Dorsolateral prefrontal cortex (tissue), 120 donors: ENCODE measurements at regions of chrX and their contacts with region 1.

Region 1: GRCh38 chrX:71181910-71182799 is 37.5 kb downstream of the NLGN3 start:
- DNase-seq: peak; percentile 60 to 91 (median 86)
- H3K4me3 ChIP-seq: peak overlapping the region; percentile 28 to 69 (median 55)
- H3K27ac ChIP-seq: peak overlapping the region; percentile 3 to 96 (median 88)
- H3K27me3 ChIP-seq: peaks cover 0 to 56% (median 8%) of the 10 kb centered on the region in 45 donors
- CTCF ChIP-seq: peak in 10 of 56 donors; percentile 9 to 39 (median 18)

Region 2: GRCh38 chrX:70998411-70999027 is 183.6 kb before region 1 on chrX:
- intact Hi-C with region 1: loop called in 1 of 2 experiments (anchors 2 kb)
- DNase-seq: peak in 4 of 10 donors; percentile 7 to 38 (median 32)
- H3K4me3 ChIP-seq: no peak overlapping the region
- H3K27ac ChIP-seq: no peak overlapping the region
- H3K27me3 ChIP-seq: peaks cover 0 to 28% (median 0%) of the 10 kb centered on the region in 45 donors
- CTCF ChIP-seq: peak in 41 of 56 donors; percentile 13 to 61 (median 35)

Region 3: DNA sequence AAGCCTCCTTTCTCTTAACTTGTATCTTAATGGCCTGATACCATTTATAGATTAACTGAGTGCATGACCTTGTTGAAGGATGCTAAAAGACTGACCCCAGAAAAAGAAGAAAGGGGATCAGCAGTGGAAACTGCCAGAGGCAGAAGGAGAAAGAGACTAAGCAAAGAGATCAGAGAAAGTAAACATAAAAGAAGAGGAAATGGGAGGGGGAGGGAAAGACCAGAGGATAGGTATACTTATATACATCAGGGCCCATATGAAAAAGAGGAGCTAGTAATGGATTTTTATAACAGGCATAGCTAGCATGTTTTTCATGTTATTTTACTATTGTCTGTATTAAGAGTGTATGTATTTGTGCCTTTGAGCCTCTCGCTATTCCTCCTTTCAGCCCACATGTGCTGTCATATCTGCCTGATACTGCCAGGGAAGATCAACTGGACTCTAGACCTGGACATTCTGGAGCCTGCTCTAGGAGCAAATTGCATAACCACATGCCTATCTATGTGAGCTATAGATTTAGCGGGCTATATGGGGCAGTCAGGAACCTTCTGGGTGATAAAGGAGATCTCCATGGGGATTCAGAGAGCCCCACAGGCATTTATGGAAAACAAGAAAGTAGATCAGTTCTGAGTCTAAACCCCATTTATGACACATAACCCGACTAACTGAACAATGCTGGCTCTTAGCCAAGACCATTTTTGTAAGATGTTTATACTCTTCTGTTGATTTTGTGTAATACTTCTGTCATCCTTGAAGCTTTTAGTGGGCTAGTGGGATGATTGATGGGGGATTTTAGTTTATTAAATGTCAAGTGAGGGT is 100.6 kb before region 1 on chrX:
- intact Hi-C with region 1: no loop called
- DNase-seq: no peak
- H3K4me3 ChIP-seq: no peak overlapping the region
- H3K27ac ChIP-seq: no peak overlapping the region
- H3K27me3 ChIP-seq: peaks cover 0 to 45% (median 7%) of the 10 kb centered on the region in 45 donors
- CTCF ChIP-seq: no peak

Region 4: GRCh38 chrX:71118032-71118984 is 63.8 kb before region 1 on chrX and contains the start of gene MED12:
- intact Hi-C with region 1: no loop called
- DNase-seq: peak; percentile 72 to 91 (median 85)
- H3K4me3 ChIP-seq: peak within 1 kb of the TSS; percentile 42 to 77 (median 60)
- H3K27ac ChIP-seq: peak within 1 kb of the TSS in 57 of 59 donors; percentile 20 to 91 (median 76)
- H3K27me3 ChIP-seq: peaks cover 0 to 39% (median 0%) of the 10 kb centered on the region in 45 donors
- CTCF ChIP-seq: peak in 6 of 56 donors; percentile 6 to 29 (median 10)
- total RNA-seq, gene MED12: 29.6 to 65.9 (median 47.2) TPM

Region 5: DNA sequence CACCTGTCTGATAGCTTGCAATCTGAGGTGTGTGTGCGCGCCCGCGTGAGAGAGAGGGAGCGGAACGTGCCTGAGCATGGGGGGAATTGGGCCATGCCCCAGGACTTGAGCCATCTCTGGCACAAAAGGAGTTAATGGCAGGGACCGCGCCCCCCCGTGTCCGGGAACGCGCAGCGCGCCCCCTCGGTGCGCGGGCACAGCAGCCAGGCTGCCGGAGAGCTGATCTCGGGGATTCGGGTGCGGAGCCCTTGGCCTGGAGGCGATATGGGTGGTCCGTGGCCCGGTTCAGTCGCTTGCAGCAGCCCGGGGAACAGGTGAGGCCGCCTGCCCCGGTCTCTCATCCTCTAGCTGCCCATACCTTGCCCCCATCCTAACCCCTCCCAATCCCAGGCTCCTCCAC is 37.5 kb before region 1 on chrX and contains the start of gene NLGN3:
- intact Hi-C with region 1: loop called in 1 of 2 experiments (anchors 5 kb)
- DNase-seq: peak; percentile 49 to 76 (median 56)
- H3K4me3 ChIP-seq: peak within 1 kb of the TSS; percentile 7 to 77 (median 61)
- H3K27ac ChIP-seq: peak within 1 kb of the TSS in 56 of 59 donors; percentile 46 to 90 (median 84)
- H3K27me3 ChIP-seq: peaks cover 0 to 58% (median 7%) of the 10 kb centered on the region in 45 donors
- CTCF ChIP-seq: peak in 5 of 56 donors; percentile 6 to 12 (median 10)
- total RNA-seq, gene NLGN3: 39.2 to 90.6 (median 57.8) TPM

Region 6: DNA sequence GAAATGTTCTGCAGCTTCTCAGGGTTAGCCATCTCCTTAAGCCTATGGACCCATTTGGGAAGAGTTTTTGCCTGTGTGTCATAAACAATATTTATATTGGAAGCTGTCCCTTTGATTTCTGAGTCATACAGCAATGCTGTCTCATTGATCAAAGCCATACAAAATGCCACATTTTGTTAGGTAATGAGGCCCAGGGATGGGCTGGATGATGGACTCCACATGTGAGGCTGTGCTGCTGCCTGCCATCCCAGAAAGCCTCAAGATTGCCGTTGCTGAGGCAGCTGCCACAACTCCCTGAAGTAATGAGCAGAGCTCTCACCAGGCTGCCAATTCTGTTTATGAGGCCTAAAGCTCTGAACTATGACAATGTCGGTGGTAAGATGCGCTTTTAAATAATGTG is 28.7 kb after region 1 on chrX:
- intact Hi-C with region 1: no loop called
- DNase-seq: no peak
- H3K4me3 ChIP-seq: no peak overlapping the region
- H3K27ac ChIP-seq: no peak overlapping the region
- H3K27me3 ChIP-seq: peaks cover 0 to 71% (median 20%) of the 10 kb centered on the region in 45 donors
- CTCF ChIP-seq: no peak

Region 7: DNA sequence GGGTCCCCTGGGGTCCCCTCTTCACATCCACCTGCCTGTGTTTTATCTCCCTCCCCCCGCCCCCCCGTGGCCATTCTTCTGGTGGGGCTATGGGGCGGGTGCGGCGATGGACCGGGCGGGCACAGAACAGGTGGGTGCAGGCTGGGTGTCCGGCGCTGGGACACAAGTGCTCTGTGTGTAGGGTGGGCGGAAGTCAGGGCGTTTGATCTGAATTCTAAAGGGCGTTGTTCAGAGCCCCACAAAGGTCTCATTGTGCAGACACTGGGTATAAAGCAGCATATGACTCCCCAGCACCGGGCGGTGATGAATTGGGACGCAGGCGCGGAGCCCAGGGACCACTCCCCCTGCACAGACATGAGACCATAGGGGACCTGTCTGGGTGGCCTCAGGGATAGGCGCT is 40.8 kb after region 1 on chrX and contains the start of gene GJB1:
- intact Hi-C with region 1: loop called in 1 of 2 experiments (anchors 2 kb)
- DNase-seq: peak; percentile 6 to 85 (median 73)
- H3K4me3 ChIP-seq: peak within 1 kb of the TSS in 57 of 59 donors; percentile 7 to 68 (median 44)
- H3K27ac ChIP-seq: peak within 1 kb of the TSS in 57 of 59 donors; percentile 43 to 96 (median 84)
- H3K27me3 ChIP-seq: peaks cover 0 to 64% (median 9%) of the 10 kb centered on the region in 45 donors
- CTCF ChIP-seq: no peak
- total RNA-seq, gene GJB1: 2.2 to 150 (median 24.8) TPM

Region 8: GRCh38 chrX:71283403-71284143 is 101.4 kb after region 1 on chrX and contains the start of gene NONO:
- intact Hi-C with region 1: loop called in 1 of 2 experiments (anchors 5 kb)
- DNase-seq: peak; percentile 54 to 86 (median 82)
- H3K4me3 ChIP-seq: peak within 1 kb of the TSS; percentile 52 to 84 (median 69)
- H3K27ac ChIP-seq: peak within 1 kb of the TSS; percentile 62 to 95 (median 90)
- H3K27me3 ChIP-seq: peaks cover 0 to 34% (median 0%) of the 10 kb centered on the region in 45 donors
- CTCF ChIP-seq: peak in 14 of 56 donors; percentile 4 to 23 (median 10)
- total RNA-seq, gene NONO: 98.6 to 184 (median 146) TPM

Region 9: DNA sequence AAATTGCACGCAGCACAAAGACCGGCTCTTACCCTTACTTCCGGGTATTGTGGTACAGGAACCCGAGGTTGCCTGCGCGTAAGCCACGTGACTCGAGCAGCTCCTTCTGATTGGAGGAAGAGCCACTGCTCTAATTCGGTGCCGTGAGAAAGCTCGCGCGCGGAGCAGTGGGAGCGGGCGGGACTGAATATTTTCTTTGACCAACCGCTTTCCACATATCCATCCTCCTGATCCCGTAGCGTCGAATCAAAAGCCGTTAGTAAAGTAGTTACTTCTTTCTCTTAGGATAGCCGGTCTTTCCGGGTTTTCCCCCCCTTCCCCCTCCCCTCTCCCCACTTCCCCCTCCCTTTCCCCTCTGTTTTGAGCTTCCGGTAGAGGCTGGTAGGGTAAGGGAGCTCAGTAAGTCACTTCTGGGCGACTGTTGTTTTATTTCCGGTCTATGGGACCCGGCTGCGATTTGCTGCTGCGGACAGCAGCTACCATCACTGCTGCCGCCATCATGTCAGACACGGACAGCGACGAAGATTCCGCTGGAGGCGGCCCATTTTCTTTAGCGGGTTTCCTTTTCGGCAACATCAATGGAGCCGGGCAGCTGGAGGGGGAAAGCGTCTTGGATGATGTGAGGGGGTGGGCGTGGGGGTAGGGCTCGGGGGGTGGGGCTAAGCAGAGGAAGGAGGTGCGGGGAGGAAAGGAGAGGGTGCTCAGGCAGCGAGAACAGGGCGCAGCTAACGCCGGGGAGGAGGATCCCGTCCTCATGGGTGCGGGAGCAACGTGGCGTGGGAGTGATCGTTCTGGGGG is 183.9 kb after region 1 on chrX and contains the start of gene TAF1:
- intact Hi-C with region 1: loop called in 1 of 2 experiments (anchors 5 kb)
- DNase-seq: peak; percentile 88 to 97 (median 94)
- H3K4me3 ChIP-seq: peak within 1 kb of the TSS; percentile 49 to 82 (median 69)
- H3K27ac ChIP-seq: peak within 1 kb of the TSS in 56 of 59 donors; percentile 43 to 91 (median 78)
- H3K27me3 ChIP-seq: peaks cover 0 to 12% (median 0%) of the 10 kb centered on the region in 45 donors
- CTCF ChIP-seq: peak in 3 of 56 donors; percentile 3 to 15 (median 13)
- total RNA-seq, gene TAF1: 31.9 to 66.2 (median 48.2) TPM